Cardiac septum (tissue), 1 donor: ENCODE measurements at regions of chr11 and their contacts with region 1.

Region 1: GRCh38 chr11:75445315-75445953 is 12.4 kb upstream of the KLHL35 start:
- DNase-seq: peak; percentile 85

Region 2: GRCh38 chr11:75399344-75400145 is 45.9 kb before region 1 on chr11 and contains the start of gene RPS3:
- intact Hi-C with region 1: loop called (anchors 5 kb)
- DNase-seq: peak; percentile 98
- total RNA-seq, gene RPS3: 717 TPM

Region 3: GRCh38 chr11:75525596-75526541 is 80.4 kb after region 1 on chr11 and contains the start of gene GDPD5:
- intact Hi-C with region 1: loop called (anchors 2 kb)
- DNase-seq: peak; percentile 91
- total RNA-seq, gene GDPD5: 6.9 TPM

Region 4: GRCh38 chr11:75532200-75533048 is 87.0 kb after region 1 on chr11:
- intact Hi-C with region 1: loop called (anchors 1 kb)
- DNase-seq: peak; percentile 84